ENCODE measurements at regions of chr11 and their contacts with region 1.

Region 1: GRCh38 chr11:107301886-107302285 is 155.7 kb downstream of the CWF19L2 start:
- DNase-seq: no peak
- ATAC-seq: no peak
- H3K4me3 ChIP-seq: no peak overlapping the region
- H3K4me3 Mint-ChIP-seq: no peak overlapping the region
- H3K27ac ChIP-seq: no peak overlapping the region
- H3K27ac Mint-ChIP-seq: no peak overlapping the region
- H3K4me1 ChIP-seq: no peaks in the 10 kb centered on the region
- H3K4me1 Mint-ChIP-seq: no peaks in the 10 kb centered on the region
- H3K27me3 ChIP-seq: no peaks in the 10 kb centered on the region
- H3K27me3 Mint-ChIP-seq: no peaks in the 10 kb centered on the region

Region 2: GRCh38 chr11:107337917-107338316 is 36.0 kb after region 1 on chr11:
- CTCF ChIA-PET with region 1: no interaction called
- POLR2A ChIA-PET with region 1: no interaction called
- DNase-seq: no peak
- ATAC-seq: no peak
- H3K4me3 ChIP-seq: no peak overlapping the region
- H3K4me3 Mint-ChIP-seq: no peak overlapping the region
- H3K27ac ChIP-seq: no peak overlapping the region
- H3K27ac Mint-ChIP-seq: no peak overlapping the region
- H3K4me1 ChIP-seq: no peaks in the 10 kb centered on the region
- H3K4me1 Mint-ChIP-seq: peaks cover 0 to 2% (median 0%) of the 10 kb centered on the region in 3 donors
- H3K27me3 ChIP-seq: no peaks in the 10 kb centered on the region
- H3K27me3 Mint-ChIP-seq: no peaks in the 10 kb centered on the region

Region 3: DNA sequence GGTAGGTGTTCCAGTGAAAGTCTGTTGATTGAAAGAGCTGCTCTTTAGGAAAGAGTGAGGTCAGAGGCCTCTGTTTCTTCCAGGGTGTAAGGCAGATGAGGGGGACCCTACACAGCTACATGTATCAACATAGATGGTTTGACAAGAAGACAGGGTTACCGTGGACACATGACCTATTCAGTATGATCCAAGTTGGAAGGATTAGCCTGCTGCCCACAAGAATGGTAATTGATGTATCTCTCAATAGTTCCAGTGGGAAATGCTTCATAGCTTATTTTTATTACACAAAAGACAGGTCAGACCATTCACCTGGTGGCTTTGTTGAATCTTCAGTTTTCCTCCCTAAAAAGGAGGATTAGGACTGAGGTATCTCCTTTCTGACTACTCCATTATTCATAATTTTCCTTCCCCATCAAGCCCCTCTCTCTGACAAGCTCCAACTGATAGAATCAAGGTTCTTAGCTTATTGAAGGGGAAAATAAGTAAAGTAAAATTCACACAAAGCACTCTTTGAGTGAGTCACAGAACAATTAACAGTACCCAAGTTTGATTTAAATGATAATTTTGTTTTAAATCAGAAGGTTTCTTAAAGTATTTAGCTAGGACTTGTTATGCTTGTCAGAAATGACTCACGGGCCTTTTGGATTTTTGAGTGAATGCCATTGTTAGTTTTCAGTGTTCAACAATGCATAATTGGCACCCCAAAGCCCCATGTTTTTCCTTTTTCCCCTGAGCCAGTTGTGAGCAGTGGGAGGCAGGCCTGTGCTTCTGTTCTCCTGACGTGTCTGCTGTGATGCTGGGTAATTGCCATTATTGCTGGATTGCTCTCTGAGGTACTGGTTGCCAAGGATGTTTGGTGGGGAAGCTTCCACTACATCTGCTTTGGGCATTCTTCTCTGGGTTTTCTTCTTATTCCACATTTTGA is 1736.2 kb after region 1 on chr11:
- CTCF ChIA-PET with region 1: no interaction called
- POLR2A ChIA-PET with region 1: interaction called in 1 of 2 experiments, 11 read pairs
- DNase-seq: no peak
- ATAC-seq: no peak
- H3K4me3 ChIP-seq: no peak overlapping the region
- H3K4me3 Mint-ChIP-seq: no peak overlapping the region
- H3K27ac ChIP-seq: no peak overlapping the region
- H3K27ac Mint-ChIP-seq: no peak overlapping the region
- H3K4me1 ChIP-seq: no peaks in the 10 kb centered on the region
- H3K4me1 Mint-ChIP-seq: no peaks in the 10 kb centered on the region
- H3K27me3 ChIP-seq: no peaks in the 10 kb centered on the region
- H3K27me3 Mint-ChIP-seq: peaks cover 4 to 9% of the 10 kb centered on the region in 2 donors